ENCODE measurements at regions of chr13 and their contacts with region 1.

Region 1: GRCh38 chr13:39616087-39616694 is 13.2 kb upstream of the LHFPL6 start:
- DNase-seq: peak; percentile 27
- H3K4me3 ChIP-seq: no peak overlapping the region
- H3K27ac ChIP-seq: no peak overlapping the region
- H3K4me1 ChIP-seq: no peaks in the 10 kb centered on the region
- H3K27me3 ChIP-seq: peaks cover 2% of the 10 kb centered on the region
- CTCF ChIP-seq: peak; percentile 92 to 97

Region 2: DNA sequence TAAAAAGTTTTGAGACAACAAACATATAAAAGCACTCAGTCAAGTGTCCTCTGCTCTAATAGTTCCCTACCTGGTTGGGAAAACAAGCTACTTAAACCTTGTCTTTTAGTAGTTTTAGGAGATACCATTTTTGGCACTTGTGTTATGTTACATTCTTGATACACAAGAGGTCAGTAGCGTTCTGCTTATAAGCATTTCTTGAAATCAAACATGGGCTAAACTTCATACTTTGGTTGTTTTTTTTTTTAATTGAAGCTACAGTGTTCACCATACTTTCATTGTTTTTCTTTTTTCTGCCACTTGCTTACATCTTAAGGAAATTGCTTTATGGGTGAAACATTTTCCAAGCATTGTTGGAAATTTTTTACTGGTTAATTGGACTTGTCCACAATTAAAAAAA is 565.0 kb before region 1 on chr13:
- CTCF ChIA-PET with region 1: interaction called, 13 read pairs
- dilution Hi-C with region 1: no loop called
- in situ Hi-C with region 1: loop called in 1 of 2 experiments (anchors 25 kb)
- intact Hi-C with region 1: loop called (anchors 1 kb)
- DNase-seq: peak; percentile 22
- H3K4me3 ChIP-seq: no peak overlapping the region
- H3K27ac ChIP-seq: no peak overlapping the region
- H3K4me1 ChIP-seq: peaks cover 10% of the 10 kb centered on the region
- H3K27me3 ChIP-seq: no peaks in the 10 kb centered on the region
- CTCF ChIP-seq: peak; percentile 22 to 46

Region 3: DNA sequence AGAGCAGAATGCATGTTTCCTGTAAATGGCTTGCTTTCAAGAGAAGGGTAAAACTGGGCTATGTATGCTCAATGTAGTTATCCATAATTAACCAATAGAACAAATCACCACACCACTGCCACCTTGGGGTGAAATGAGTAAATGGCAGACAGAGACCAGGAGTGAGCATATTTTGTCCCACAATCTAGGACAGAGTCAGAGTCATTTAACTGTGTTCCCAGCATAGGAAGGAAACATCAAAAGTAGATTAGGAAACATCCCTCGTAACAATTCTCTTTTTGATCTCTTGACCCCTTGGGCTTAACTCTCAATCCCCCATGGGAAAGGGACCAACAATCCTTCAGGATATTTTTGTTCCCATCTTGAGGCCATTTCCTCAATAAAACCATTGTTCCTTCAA is 353.2 kb before region 1 on chr13:
- CTCF ChIA-PET with region 1: interaction called, 4 read pairs
- dilution Hi-C with region 1: no loop called
- in situ Hi-C with region 1: loop called (anchors 5 to 10 kb)
- intact Hi-C with region 1: no loop called
- DNase-seq: peak; percentile 37
- H3K4me3 ChIP-seq: no peak overlapping the region
- H3K27ac ChIP-seq: no peak overlapping the region
- H3K4me1 ChIP-seq: no peaks in the 10 kb centered on the region
- H3K27me3 ChIP-seq: no peaks in the 10 kb centered on the region
- CTCF ChIP-seq: peak; percentile 77 to 78

Region 4: GRCh38 chr13:39415008-39415802 is 201.0 kb before region 1 on chr13:
- CTCF ChIA-PET with region 1: no interaction called
- dilution Hi-C with region 1: no loop called
- in situ Hi-C with region 1: loop called in 1 of 2 experiments (anchors 25 kb)
- intact Hi-C with region 1: loop called (anchors 1 kb)
- DNase-seq: peak; percentile 22
- H3K4me3 ChIP-seq: no peak overlapping the region
- H3K27ac ChIP-seq: no peak overlapping the region
- H3K4me1 ChIP-seq: peaks cover 7% of the 10 kb centered on the region
- H3K27me3 ChIP-seq: no peaks in the 10 kb centered on the region
- CTCF ChIP-seq: peak; percentile 53 to 73

Region 5: DNA sequence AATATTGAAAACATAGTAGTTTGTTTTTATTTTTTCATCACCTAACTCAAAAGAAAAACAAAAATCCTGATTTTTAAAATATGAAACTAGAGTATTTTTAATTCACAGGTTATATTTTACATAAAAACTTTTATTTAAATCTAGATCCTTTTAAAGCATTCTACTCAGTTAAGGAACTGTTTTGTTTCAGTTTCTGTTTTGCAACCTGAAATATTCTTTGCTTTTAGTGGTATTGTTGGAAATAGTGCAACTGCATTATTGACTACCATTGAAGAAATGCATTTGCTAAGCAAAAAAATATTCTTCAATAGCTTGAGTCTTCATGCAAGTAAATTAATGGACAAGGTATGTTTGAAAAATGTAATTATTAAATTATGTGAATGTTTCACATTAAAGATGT is 83.1 kb after region 1 on chr13:
- CTCF ChIA-PET with region 1: no interaction called
- dilution Hi-C with region 1: no loop called
- in situ Hi-C with region 1: no loop called
- intact Hi-C with region 1: no loop called
- DNase-seq: no peak
- H3K4me3 ChIP-seq: no peak overlapping the region
- H3K27ac ChIP-seq: no peak overlapping the region
- H3K4me1 ChIP-seq: no peaks in the 10 kb centered on the region
- H3K27me3 ChIP-seq: no peaks in the 10 kb centered on the region
- CTCF ChIP-seq: no peak